B cell (primary cell): ENCODE measurements at regions of chr22 and their contacts with region 1.

Region 1: GRCh38 chr22:37244114-37244921 is at the start of gene RAC2:
- DNase-seq: peak; percentile 94
- ATAC-seq: peak; percentile 65
- H3K4me3 ChIP-seq: peak within 1 kb of the TSS; percentile 88 to 99 (median 97)
- H3K4me3 Mint-ChIP-seq: peak within 1 kb of the TSS; percentile 97
- H3K27ac ChIP-seq: peak within 1 kb of the TSS; percentile 80 to 86
- H3K27ac Mint-ChIP-seq: peak within 1 kb of the TSS; percentile 89
- H3K4me1 ChIP-seq: peaks cover 50 to 68% of the 10 kb centered on the region in 2 donors
- H3K4me1 Mint-ChIP-seq: peaks cover 77% of the 10 kb centered on the region
- H3K27me3 ChIP-seq: no peaks in the 10 kb centered on the region
- H3K27me3 Mint-ChIP-seq: no peaks in the 10 kb centered on the region
- CTCF ChIP-seq: no peak
- total RNA-seq, gene RAC2: 249 and 273 TPM in 2 replicates

Region 2: GRCh38 chr22:36077271-36077670 is 1167.0 kb before region 1 on chr22:
- CTCF ChIA-PET with region 1: no interaction called
- POLR2A ChIA-PET with region 1: no interaction called
- intact Hi-C with region 1: no loop called
- DNase-seq: no peak
- ATAC-seq: no peak
- H3K4me3 ChIP-seq: no peak overlapping the region
- H3K4me3 Mint-ChIP-seq: no peak overlapping the region
- H3K27ac ChIP-seq: no peak overlapping the region
- H3K27ac Mint-ChIP-seq: no peak overlapping the region
- H3K4me1 ChIP-seq: no peaks in the 10 kb centered on the region
- H3K4me1 Mint-ChIP-seq: no peaks in the 10 kb centered on the region
- H3K27me3 ChIP-seq: peaks cover 0 to 3% (median 0%) of the 10 kb centered on the region in 4 experiments
- H3K27me3 Mint-ChIP-seq: peaks cover 6% of the 10 kb centered on the region
- CTCF ChIP-seq: no peak

Region 3: GRCh38 chr22:36528795-36529751 is 715.2 kb before region 1 on chr22 and contains the start of gene EIF3D:
- CTCF ChIA-PET with region 1: no interaction called
- POLR2A ChIA-PET with region 1: no interaction called
- intact Hi-C with region 1: loop called (anchors 5 kb)
- DNase-seq: peak; percentile 100
- ATAC-seq: peak; percentile 92
- H3K4me3 ChIP-seq: peak within 1 kb of the TSS; percentile 80 to 97 (median 88)
- H3K4me3 Mint-ChIP-seq: peak within 1 kb of the TSS; percentile 98
- H3K27ac ChIP-seq: peak within 1 kb of the TSS; percentile 88 to 93
- H3K27ac Mint-ChIP-seq: peak within 1 kb of the TSS; percentile 98
- H3K4me1 ChIP-seq: peaks cover 13 to 24% of the 10 kb centered on the region in 2 donors
- H3K4me1 Mint-ChIP-seq: peaks cover 28% of the 10 kb centered on the region
- H3K27me3 ChIP-seq: no peaks in the 10 kb centered on the region
- H3K27me3 Mint-ChIP-seq: no peaks in the 10 kb centered on the region
- CTCF ChIP-seq: no peak
- total RNA-seq, gene EIF3D: 257 and 274 TPM in 2 replicates

Region 4: DNA sequence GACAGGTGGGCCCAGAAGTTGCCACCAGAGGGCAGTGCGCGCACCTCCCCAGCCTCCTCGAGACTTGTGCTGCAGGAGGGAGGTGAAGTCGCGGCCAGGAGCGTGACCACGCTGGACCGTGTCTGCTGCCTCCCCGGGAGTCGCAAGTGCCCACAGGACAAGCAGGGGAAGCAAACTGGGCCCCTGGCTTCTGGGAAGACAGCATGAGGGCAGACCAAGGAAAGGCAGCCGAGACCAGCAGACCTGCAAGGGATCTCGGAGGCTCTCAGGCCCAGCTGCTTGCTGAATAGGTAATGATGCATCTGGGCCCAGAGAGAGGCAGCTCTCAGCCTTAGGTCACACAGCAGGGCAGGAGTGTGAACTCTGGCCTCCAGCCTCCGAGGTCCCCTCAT is 77.6 kb before region 1 on chr22:
- CTCF ChIA-PET with region 1: interaction called, 11 read pairs
- POLR2A ChIA-PET with region 1: no interaction called
- intact Hi-C with region 1: no loop called
- DNase-seq: peak; percentile 84
- ATAC-seq: peak; percentile 59
- H3K4me3 ChIP-seq: no peak overlapping the region
- H3K4me3 Mint-ChIP-seq: peak overlapping the region; percentile 57
- H3K27ac ChIP-seq: no peak overlapping the region
- H3K27ac Mint-ChIP-seq: peak overlapping the region; percentile 47
- H3K4me1 ChIP-seq: peaks cover 17 to 46% of the 10 kb centered on the region in 2 donors
- H3K4me1 Mint-ChIP-seq: peaks cover 40% of the 10 kb centered on the region
- H3K27me3 ChIP-seq: no peaks in the 10 kb centered on the region
- H3K27me3 Mint-ChIP-seq: peaks cover 4% of the 10 kb centered on the region
- CTCF ChIP-seq: peak; percentile 92

Region 5: GRCh38 chr22:37186228-37186996 is 57.9 kb before region 1 on chr22:
- CTCF ChIA-PET with region 1: no interaction called
- POLR2A ChIA-PET with region 1: no interaction called
- intact Hi-C with region 1: no loop called
- DNase-seq: peak; percentile 75
- ATAC-seq: peak; percentile 24
- H3K4me3 ChIP-seq: no peak overlapping the region
- H3K4me3 Mint-ChIP-seq: no peak overlapping the region
- H3K27ac ChIP-seq: no peak overlapping the region
- H3K27ac Mint-ChIP-seq: no peak overlapping the region
- H3K4me1 ChIP-seq: peaks cover 0 to 14% of the 10 kb centered on the region in 2 donors
- H3K4me1 Mint-ChIP-seq: peaks cover 9% of the 10 kb centered on the region
- H3K27me3 ChIP-seq: peaks cover 0 to 3% (median 0%) of the 10 kb centered on the region in 4 experiments
- H3K27me3 Mint-ChIP-seq: no peaks in the 10 kb centered on the region
- CTCF ChIP-seq: no peak

Region 6: DNA sequence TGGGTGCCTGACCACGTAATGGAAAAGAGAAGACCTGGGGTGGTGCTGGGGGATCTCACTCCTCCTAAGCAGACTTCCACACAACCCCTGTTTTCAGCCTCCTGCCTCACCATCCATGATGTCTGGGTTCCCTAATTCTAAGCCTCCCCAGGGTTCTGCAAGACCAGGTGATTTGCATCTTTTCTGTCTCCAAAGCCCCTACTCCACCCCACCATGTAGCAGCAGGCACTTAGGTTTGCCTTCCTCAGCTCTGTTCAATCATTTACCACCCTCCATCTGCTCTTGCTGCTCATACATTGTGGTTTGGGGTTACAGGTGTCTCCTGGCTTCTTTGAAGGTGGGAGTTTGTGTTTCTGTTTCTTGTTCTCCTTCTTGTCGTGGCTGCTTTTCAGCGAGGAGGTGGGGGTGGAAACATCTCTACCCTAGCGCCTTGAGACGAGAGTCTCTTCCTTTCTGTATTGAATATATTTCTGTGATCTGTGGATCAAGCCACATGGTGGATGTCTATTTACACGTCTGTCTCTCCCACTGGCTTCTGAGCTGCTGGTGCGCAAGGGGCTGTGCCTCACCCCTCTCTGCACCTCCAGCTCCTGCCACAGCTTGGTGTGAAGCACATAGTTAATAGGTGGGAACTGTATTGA is 25.4 kb before region 1 on chr22:
- CTCF ChIA-PET with region 1: interaction called, 129 read pairs
- POLR2A ChIA-PET with region 1: interaction called, 83 read pairs
- intact Hi-C with region 1: loop called (anchors 1 kb)
- DNase-seq: peak; percentile 93
- ATAC-seq: peak; percentile 88
- H3K4me3 ChIP-seq: peak overlapping the region in 4 of 5 experiments; percentile 11 to 29 (median 22)
- H3K4me3 Mint-ChIP-seq: peak overlapping the region; percentile 69
- H3K27ac ChIP-seq: peak overlapping the region; percentile 87 to 93
- H3K27ac Mint-ChIP-seq: peak overlapping the region; percentile 94
- H3K4me1 ChIP-seq: peaks cover 65 to 74% of the 10 kb centered on the region in 2 donors
- H3K4me1 Mint-ChIP-seq: peaks cover 68% of the 10 kb centered on the region
- H3K27me3 ChIP-seq: no peaks in the 10 kb centered on the region
- H3K27me3 Mint-ChIP-seq: no peaks in the 10 kb centered on the region
- CTCF ChIP-seq: no peak

Region 7: DNA sequence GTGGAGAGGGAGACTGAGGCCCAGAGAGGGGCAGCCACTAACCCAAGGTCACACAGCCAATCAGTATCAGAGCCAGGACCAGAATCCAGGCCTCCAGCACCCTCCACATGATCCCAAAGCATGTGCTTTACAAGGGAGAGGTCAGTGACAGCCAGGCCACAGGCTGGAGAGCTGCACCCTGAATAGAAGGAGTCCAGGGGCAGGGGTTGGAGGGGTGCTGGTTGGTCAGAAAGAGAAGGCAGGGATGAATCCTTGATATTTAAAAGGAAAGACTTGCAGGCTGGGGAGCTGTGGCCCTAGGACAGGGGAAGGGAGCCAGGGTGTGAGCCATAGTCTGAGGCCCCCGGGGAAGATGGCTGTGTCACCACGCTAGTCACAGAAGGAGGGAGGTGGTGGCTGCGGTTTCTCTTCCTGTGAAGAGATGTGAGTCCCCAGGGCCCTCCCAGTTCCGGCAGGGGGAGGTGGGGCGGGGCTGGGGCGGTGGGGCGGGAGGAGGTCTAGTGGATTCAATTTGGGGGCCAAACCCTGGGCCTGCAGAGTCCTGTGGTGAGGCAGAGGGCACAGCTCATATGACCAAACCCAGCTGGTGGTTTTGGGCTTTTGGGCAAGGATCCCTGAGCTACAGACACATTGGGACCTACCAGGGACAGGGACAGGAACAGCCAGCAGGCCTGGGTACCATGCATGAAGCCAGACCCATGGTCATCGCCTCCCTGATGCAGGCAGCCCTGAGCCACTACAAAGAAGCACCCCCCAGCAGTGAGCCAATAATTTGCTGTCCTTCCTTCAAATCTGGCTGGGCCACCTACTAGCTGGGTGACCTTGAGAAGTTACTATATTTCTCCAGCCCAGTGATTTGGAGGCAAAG is 14.3 kb before region 1 on chr22:
- CTCF ChIA-PET with region 1: interaction called, 129 read pairs
- POLR2A ChIA-PET with region 1: interaction called, 83 read pairs
- intact Hi-C with region 1: loop called (anchors 1 kb)
- DNase-seq: peak; percentile 85
- ATAC-seq: peak; percentile 87
- H3K4me3 ChIP-seq: peak overlapping the region; percentile 13 to 30 (median 18)
- H3K4me3 Mint-ChIP-seq: peak overlapping the region; percentile 86
- H3K27ac ChIP-seq: peak overlapping the region; percentile 91 to 96
- H3K27ac Mint-ChIP-seq: peak overlapping the region; percentile 100
- H3K4me1 ChIP-seq: peaks cover 85 to 95% of the 10 kb centered on the region in 2 donors
- H3K4me1 Mint-ChIP-seq: peaks cover 88% of the 10 kb centered on the region
- H3K27me3 ChIP-seq: no peaks in the 10 kb centered on the region
- H3K27me3 Mint-ChIP-seq: no peaks in the 10 kb centered on the region
- CTCF ChIP-seq: no peak

Region 8: GRCh38 chr22:37267135-37267587 is 22.8 kb after region 1 on chr22:
- CTCF ChIA-PET with region 1: interaction called, 377 read pairs
- POLR2A ChIA-PET with region 1: no interaction called
- intact Hi-C with region 1: no loop called
- DNase-seq: peak; percentile 82
- ATAC-seq: peak; percentile 98
- H3K4me3 ChIP-seq: peak overlapping the region; percentile 63 to 93 (median 67)
- H3K4me3 Mint-ChIP-seq: peak overlapping the region; percentile 93
- H3K27ac ChIP-seq: peak overlapping the region; percentile 69 to 79
- H3K27ac Mint-ChIP-seq: peak overlapping the region; percentile 97
- H3K4me1 ChIP-seq: peaks cover 21 to 28% of the 10 kb centered on the region in 2 donors
- H3K4me1 Mint-ChIP-seq: peaks cover 33% of the 10 kb centered on the region
- H3K27me3 ChIP-seq: no peaks in the 10 kb centered on the region
- H3K27me3 Mint-ChIP-seq: no peaks in the 10 kb centered on the region
- CTCF ChIP-seq: peak; percentile 96

Region 9: GRCh38 chr22:37849089-37849751 is 604.9 kb after region 1 on chr22 and contains the start of gene EIF3L:
- CTCF ChIA-PET with region 1: no interaction called
- POLR2A ChIA-PET with region 1: no interaction called
- intact Hi-C with region 1: loop called (anchors 10 kb)
- DNase-seq: peak; percentile 92
- ATAC-seq: peak; percentile 68
- H3K4me3 ChIP-seq: peak within 1 kb of the TSS; percentile 62 to 98 (median 90)
- H3K4me3 Mint-ChIP-seq: peak within 1 kb of the TSS; percentile 91
- H3K27ac ChIP-seq: peak within 1 kb of the TSS; percentile 81 to 90
- H3K27ac Mint-ChIP-seq: peak within 1 kb of the TSS; percentile 99
- H3K4me1 ChIP-seq: peaks cover 22 to 30% of the 10 kb centered on the region in 2 donors
- H3K4me1 Mint-ChIP-seq: peaks cover 43% of the 10 kb centered on the region
- H3K27me3 ChIP-seq: no peaks in the 10 kb centered on the region
- H3K27me3 Mint-ChIP-seq: no peaks in the 10 kb centered on the region
- CTCF ChIP-seq: no peak
- total RNA-seq, gene EIF3L: 526 and 560 TPM in 2 replicates